Motor neuron (in vitro differentiated cells): ENCODE measurements at regions of chr18 and their contacts with region 1.

Region 1: GRCh38 chr18:50644810-50645209 is 84.9 kb downstream of the MAPK4 start:
- ATAC-seq: peak in 6 of 8 experiments; percentile 27 to 79 (median 58)
- H3K4me3 ChIP-seq: no peak overlapping the region
- H3K27ac ChIP-seq: no peak overlapping the region
- H3K4me1 ChIP-seq: peaks cover 0 to 4% of the 10 kb centered on the region in 2 donors

Region 2: GRCh38 chr18:50726960-50727589 is 82.3 kb after region 1 on chr18:
- in situ Hi-C with region 1: loop called in 1 of 9 experiments (anchors 25 kb)
- ATAC-seq: peak in 1 of 8 experiments; percentile 9
- H3K4me3 ChIP-seq: no peak overlapping the region
- H3K27ac ChIP-seq: no peak overlapping the region
- H3K4me1 ChIP-seq: peaks cover 0 to 5% of the 10 kb centered on the region in 2 donors

Region 3: GRCh38 chr18:52160652-52161051 is 1515.8 kb after region 1 on chr18:
- in situ Hi-C with region 1: no loop called
- ATAC-seq: peak in 4 of 8 experiments; percentile 45 to 76 (median 58)
- H3K4me3 ChIP-seq: no peak overlapping the region
- H3K27ac ChIP-seq: no peak overlapping the region
- H3K4me1 ChIP-seq: no peaks in the 10 kb centered on the region